ENCODE measurements at regions of chr20 and their contacts with region 1.

Region 1: GRCh38 chr20:47031004-47031403 is 136.4 kb downstream of the EYA2 start:
- DNase-seq: no peak
- ATAC-seq: no peak
- H3K4me3 ChIP-seq: no peak overlapping the region
- H3K27ac ChIP-seq: no peak overlapping the region
- H3K4me1 ChIP-seq: no peaks in the 10 kb centered on the region; the same call in 1 of the 2 replicates
- H3K27me3 ChIP-seq: no peaks in the 10 kb centered on the region
- CTCF ChIP-seq: no peak
- POLR2A ChIP-seq: no peak
- RAD21 ChIP-seq: no peak

Region 2: GRCh38 chr20:47055699-47056369 is 24.8 kb after region 1 on chr20:
- CTCF ChIA-PET with region 1: no interaction called
- POLR2A ChIA-PET with region 1: interaction called, 13 read pairs
- dilution Hi-C with region 1: no loop called
- in situ Hi-C with region 1: no loop called
- intact Hi-C with region 1: no loop called
- DNase-seq: peak; percentile 66
- ATAC-seq: no peak
- H3K4me3 ChIP-seq: no peak overlapping the region
- H3K27ac ChIP-seq: no peak overlapping the region
- H3K4me1 ChIP-seq: peaks cover 2% of the 10 kb centered on the region; the same call in 1 of the 2 replicates
- H3K27me3 ChIP-seq: no peaks in the 10 kb centered on the region
- CTCF ChIP-seq: no peak
- POLR2A ChIP-seq: no peak
- RAD21 ChIP-seq: no peak